ENCODE measurements at regions of chr1 and their contacts with region 1.

Region 1: GRCh38 chr1:30280572-30280971 is 442.8 kb downstream of the MATN1 start:
- DNase-seq: no peak
- ATAC-seq: no peak
- H3K4me3 ChIP-seq: no peak overlapping the region
- H3K27ac ChIP-seq: no peak overlapping the region
- H3K4me1 ChIP-seq: no peaks in the 10 kb centered on the region
- H3K27me3 ChIP-seq: peaks cover 45% of the 10 kb centered on the region
- CTCF ChIP-seq: no peak
- POLR2A ChIP-seq: no peak
- RAD21 ChIP-seq: no peak

Region 2: DNA sequence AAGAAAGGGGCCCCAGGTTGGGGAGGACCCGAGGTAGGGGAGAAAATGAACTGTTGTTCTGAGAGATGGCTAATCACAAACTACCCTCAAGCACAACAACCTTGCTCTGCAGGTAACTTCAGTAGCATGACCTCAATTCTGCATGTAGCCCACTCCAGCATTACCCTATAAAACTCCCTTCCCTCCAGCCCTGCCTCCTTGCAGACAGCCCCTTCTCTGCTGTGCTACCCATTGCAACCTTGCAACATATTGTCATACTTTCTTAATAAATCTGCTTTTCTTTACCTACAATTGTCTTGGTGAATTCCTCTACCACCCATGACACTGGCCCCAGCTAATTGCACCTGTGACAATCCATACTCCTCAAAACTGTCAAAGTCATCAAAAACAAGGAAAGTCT is 13.9 kb after region 1 on chr1:
- CTCF ChIA-PET with region 1: no interaction called
- POLR2A ChIA-PET with region 1: no interaction called
- RAD21 ChIA-PET with region 1: no interaction called
- intact Hi-C with region 1: loop called (anchors 2 kb)
- DNase-seq: no peak
- ATAC-seq: no peak
- H3K4me3 ChIP-seq: no peak overlapping the region
- H3K27ac ChIP-seq: no peak overlapping the region
- H3K4me1 ChIP-seq: no peaks in the 10 kb centered on the region
- H3K27me3 ChIP-seq: peaks cover 38% of the 10 kb centered on the region
- CTCF ChIP-seq: no peak
- POLR2A ChIP-seq: no peak
- RAD21 ChIP-seq: no peak

Region 3: GRCh38 chr1:30763651-30764248 is 483.2 kb after region 1 on chr1:
- CTCF ChIA-PET with region 1: no interaction called
- POLR2A ChIA-PET with region 1: no interaction called
- RAD21 ChIA-PET with region 1: no interaction called
- intact Hi-C with region 1: no loop called
- DNase-seq: no peak
- ATAC-seq: no peak
- H3K4me3 ChIP-seq: no peak overlapping the region
- H3K27ac ChIP-seq: no peak overlapping the region
- H3K4me1 ChIP-seq: peaks cover 0 to 15% of the 10 kb centered on the region in 2 experiments; a peak in 2 of 4 replicates
- H3K27me3 ChIP-seq: no peaks in the 10 kb centered on the region
- CTCF ChIP-seq: no peak
- POLR2A ChIP-seq: no peak
- RAD21 ChIP-seq: no peak

Measured in HCT116 (cell line).